Pancreas (tissue), 10 donors: ENCODE measurements at regions of chr11 and their contacts with region 1.

Region 1: DNA sequence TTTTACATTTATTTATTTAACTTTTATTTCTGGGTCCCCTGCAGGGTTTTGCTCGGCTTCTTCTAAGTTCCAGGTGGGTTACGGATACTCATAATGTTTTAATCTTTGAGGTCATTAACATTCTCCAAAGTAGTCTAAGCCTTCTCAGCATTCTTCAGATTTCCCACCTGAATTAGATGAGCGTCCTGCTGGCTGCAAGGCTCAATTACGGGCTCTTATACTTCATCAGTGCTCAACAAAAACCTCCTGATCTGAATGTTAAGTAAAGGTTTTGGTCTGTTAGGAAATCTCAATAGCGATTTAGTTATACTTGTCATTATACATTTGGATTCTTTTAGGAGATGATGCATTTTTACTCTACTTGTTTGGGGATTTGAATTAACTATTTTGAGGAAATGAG is 27.3 kb upstream of the NFRKB start:
- DNase-seq: no peak
- ATAC-seq: no peak
- H3K4me3 ChIP-seq: no peak overlapping the region
- H3K27ac ChIP-seq: no peak overlapping the region
- H3K4me1 ChIP-seq: no peaks in the 10 kb centered on the region
- H3K27me3 ChIP-seq: no peaks in the 10 kb centered on the region
- CTCF ChIP-seq: no peak

Region 2: GRCh38 chr11:130131961-130132850 is 209.5 kb after region 1 on chr11:
- intact Hi-C with region 1: loop called (anchors 5 to 10 kb)
- DNase-seq: peak in 2 of 6 donors; percentile 37 to 67
- ATAC-seq: peak; percentile 69 to 96 (median 88)
- H3K4me3 ChIP-seq: no peak overlapping the region
- H3K27ac ChIP-seq: no peak overlapping the region
- H3K4me1 ChIP-seq: no peaks in the 10 kb centered on the region
- H3K27me3 ChIP-seq: no peaks in the 10 kb centered on the region
- CTCF ChIP-seq: peak; percentile 26 to 79 (median 70)